ENCODE measurements at regions of chr1 and their contacts with region 1.

Region 1: DNA sequence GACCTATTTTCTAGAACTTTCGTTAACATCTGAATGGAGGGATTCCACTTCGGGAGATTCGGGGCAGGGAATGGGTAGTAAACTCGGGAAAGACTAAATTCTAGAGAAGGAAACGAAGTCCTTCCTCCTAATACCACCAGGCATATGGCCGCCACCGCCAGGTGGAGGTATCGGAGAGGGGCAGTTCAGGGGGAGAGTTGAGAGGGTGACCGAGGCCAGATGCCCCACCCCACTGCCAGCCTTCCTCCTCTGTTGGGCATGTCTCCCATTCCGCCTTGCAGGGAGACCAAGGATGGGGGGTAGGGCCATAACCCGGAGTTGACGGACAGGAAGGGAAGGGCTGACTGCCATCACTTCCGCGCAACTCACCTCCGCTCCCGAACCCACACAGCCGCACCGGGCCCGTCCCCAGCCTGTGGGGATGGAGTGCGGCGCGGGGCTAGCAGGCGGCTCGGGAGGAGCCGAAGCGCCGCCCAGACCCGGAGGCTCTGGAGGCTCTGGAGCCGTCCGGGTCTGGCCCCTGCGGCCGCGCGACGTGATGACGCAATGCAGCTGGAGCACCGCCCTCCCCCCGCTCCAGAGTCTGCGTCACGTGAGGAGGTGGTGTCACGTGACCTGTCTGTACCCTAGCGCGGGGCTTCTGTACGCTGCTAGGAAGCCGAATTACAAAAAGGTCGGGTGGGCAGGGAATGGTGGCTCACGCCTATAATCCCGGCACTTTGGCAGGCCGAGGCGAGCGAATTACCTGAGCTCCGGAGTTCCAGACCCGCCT is at the start of gene KLHL12:
- DNase-seq: peak; percentile 92
- H3K4me3 Mint-ChIP-seq: peak within 1 kb of the TSS; percentile 97
- H3K27ac Mint-ChIP-seq: peak within 1 kb of the TSS; percentile 95
- H3K4me1 Mint-ChIP-seq: peaks cover 34% of the 10 kb centered on the region
- H3K27me3 Mint-ChIP-seq: peaks cover 3% of the 10 kb centered on the region
- total RNA-seq, gene KLHL12: 24.9 and 25.5 TPM in 2 replicates

Region 2: DNA sequence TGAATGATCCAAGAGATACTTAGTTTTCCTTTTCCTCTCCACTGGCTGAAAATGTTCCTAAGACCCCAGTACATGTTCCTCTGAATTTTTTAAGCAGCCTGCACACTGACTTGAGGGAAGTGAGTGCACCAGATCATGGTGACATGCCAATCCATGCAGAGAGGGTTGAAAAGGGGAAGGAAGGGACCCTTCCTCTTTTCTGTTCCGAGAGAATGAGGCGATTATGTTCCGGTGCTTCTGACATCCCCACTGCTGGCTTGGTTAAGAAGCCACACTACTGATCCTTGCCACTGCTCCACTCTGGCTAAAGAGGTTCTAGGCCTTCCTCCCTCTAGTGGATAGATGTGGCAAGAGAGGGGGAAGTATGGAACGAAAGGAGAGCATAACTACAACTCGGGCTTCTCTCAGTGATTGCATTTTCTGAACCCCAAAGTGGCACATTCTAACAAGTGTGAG is 42.0 kb after region 1 on chr1:
- intact Hi-C with region 1: loop called (anchors 1 kb)
- DNase-seq: peak; percentile 20
- H3K4me3 Mint-ChIP-seq: peak overlapping the region; percentile 48
- H3K27ac Mint-ChIP-seq: no peak overlapping the region
- H3K4me1 Mint-ChIP-seq: peaks cover 35% of the 10 kb centered on the region
- H3K27me3 Mint-ChIP-seq: peaks cover 11% of the 10 kb centered on the region

Region 3: GRCh38 chr1:203006948-203007871 is 80.3 kb after region 1 on chr1 and contains the start of gene TMEM183A:
- intact Hi-C with region 1: loop called (anchors 1 kb)
- DNase-seq: peak; percentile 95
- H3K4me3 Mint-ChIP-seq: peak within 1 kb of the TSS; percentile 89
- H3K27ac Mint-ChIP-seq: peak within 1 kb of the TSS; percentile 96
- H3K4me1 Mint-ChIP-seq: peaks cover 34% of the 10 kb centered on the region
- H3K27me3 Mint-ChIP-seq: no peaks in the 10 kb centered on the region
- total RNA-seq, gene TMEM183A: 69.9 and 83.6 TPM in 2 replicates

Region 4: GRCh38 chr1:203026031-203026989 is 99.4 kb after region 1 on chr1 and contains the start of gene PPFIA4:
- intact Hi-C with region 1: loop called (anchors 1 kb)
- DNase-seq: peak; percentile 87
- H3K4me3 Mint-ChIP-seq: peak within 1 kb of the TSS; percentile 85
- H3K27ac Mint-ChIP-seq: peak within 1 kb of the TSS; percentile 65
- H3K4me1 Mint-ChIP-seq: peaks cover 25% of the 10 kb centered on the region
- H3K27me3 Mint-ChIP-seq: no peaks in the 10 kb centered on the region
- total RNA-seq, gene PPFIA4: 11.5 and 14.9 TPM in 2 replicates

Measured in activated T-helper 1 cell treated with anti-CD3 and anti-CD28 coated beads, Interleukin-12 subunit alpha, Interleukin-12 subunit beta, Interleukin-2, Interleukin-4 antibody, amounts not matched to agents 30 ng/mL and 10 ng/mL and 1 ng/mL, durations not matched to agents 14 hours and 24 hours and 36 hours (primary cell).